MCF 10A (cell line): ENCODE measurements at regions of chr13 and their contacts with region 1.

Region 1: GRCh38 chr13:95378603-95379002 is 77.4 kb upstream of the ABCC4 start:
- DNase-seq: peak; percentile 54
- H3K4me3 Mint-ChIP-seq: no peak overlapping the region
- H3K27ac Mint-ChIP-seq: no peak overlapping the region
- H3K4me1 Mint-ChIP-seq: peaks cover 6% of the 10 kb centered on the region
- H3K27me3 Mint-ChIP-seq: peaks cover 14% of the 10 kb centered on the region
- CTCF ChIP-seq: no peak

Region 2: DNA sequence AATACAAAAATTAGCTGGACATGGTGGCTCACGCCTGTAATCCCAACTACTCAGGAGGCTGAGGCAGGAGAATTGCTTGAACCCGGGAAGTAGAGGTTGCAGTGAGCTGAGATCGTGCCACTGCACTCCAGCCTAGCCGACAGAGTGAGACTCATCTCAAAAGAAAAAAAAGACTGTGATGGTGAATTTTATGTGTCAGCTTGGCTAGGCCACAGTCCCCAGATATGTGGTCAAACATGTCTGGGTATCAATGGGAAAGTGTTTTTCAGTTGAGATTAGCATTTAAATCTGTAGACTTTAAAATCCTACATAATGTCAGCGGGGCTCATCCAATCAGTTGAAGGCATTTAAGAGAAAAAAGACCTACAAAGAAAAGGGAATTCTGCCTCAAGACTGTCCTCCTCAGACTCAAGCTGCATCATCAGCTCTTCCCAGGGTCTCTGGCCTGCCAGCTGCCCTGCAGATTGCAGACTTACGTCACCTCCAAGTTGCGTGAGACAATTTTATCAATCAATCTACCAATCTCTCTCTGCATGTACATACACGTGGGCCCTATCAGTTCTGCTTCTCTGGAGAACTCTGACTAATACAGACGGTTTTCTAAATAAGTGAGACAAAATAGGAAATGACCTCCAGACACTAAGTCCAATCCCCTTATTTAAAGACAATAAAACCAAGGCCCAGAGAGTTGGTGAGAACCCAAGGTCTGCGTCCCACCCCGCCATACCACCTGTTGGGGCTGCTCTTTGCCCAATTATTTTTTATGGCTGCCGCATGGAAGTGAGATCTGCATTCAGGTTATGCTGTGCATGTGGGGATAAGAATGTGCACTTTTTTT is 176.6 kb before region 1 on chr13:
- CTCF ChIA-PET with region 1: interaction called, 12 read pairs
- POLR2A ChIA-PET with region 1: no interaction called
- intact Hi-C with region 1: no loop called
- DNase-seq: no peak
- H3K4me3 Mint-ChIP-seq: no peak overlapping the region
- H3K27ac Mint-ChIP-seq: no peak overlapping the region
- H3K4me1 Mint-ChIP-seq: no peaks in the 10 kb centered on the region
- H3K27me3 Mint-ChIP-seq: no peaks in the 10 kb centered on the region
- CTCF ChIP-seq: no peak

Region 3: GRCh38 chr13:95301183-95301967 is 77.2 kb before region 1 on chr13 and contains the start of gene ABCC4:
- CTCF ChIA-PET with region 1: interaction called, 153 read pairs
- POLR2A ChIA-PET with region 1: interaction called, 6 read pairs
- intact Hi-C with region 1: loop called (anchors 1 kb)
- DNase-seq: peak; percentile 66
- H3K4me3 Mint-ChIP-seq: peak within 1 kb of the TSS; percentile 75
- H3K27ac Mint-ChIP-seq: peak within 1 kb of the TSS; percentile 41
- H3K4me1 Mint-ChIP-seq: peaks cover 10% of the 10 kb centered on the region
- H3K27me3 Mint-ChIP-seq: no peaks in the 10 kb centered on the region
- CTCF ChIP-seq: no peak
- total RNA-seq, gene ABCC4: 13.8 and 13.9 TPM in 2 replicates

Region 4: DNA sequence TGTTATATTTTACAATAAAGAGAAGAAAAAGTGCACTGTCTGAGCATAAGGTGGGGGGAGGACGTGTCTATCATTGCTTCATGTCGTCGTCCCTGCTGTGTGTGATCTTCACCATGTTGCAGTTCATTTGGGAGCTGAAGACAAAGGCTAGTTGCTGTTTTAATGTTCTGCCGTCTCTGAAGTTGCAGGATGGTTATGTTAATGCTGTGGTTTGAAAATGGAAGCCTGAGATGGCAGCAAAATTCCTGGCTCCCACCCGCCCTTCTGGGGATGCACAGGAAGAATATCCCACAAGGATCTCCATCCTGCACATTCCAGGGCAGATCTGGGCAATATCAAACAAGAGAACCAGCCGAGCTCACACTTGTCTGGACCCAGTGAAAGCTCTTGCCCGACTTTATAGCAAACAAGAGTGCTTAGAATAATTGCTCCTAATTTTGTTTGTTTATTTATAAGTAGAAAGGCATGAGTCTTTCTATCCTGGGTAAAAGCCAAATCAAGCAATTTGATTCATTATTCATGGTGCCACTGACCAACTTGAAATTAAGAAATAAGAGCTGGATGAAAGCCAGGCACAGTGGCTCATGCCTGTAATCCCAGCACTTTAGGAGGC is 32.9 kb after region 1 on chr13:
- CTCF ChIA-PET with region 1: interaction called, 172 read pairs
- POLR2A ChIA-PET with region 1: no interaction called
- intact Hi-C with region 1: no loop called
- DNase-seq: peak; percentile 86
- H3K4me3 Mint-ChIP-seq: no peak overlapping the region
- H3K27ac Mint-ChIP-seq: no peak overlapping the region
- H3K4me1 Mint-ChIP-seq: no peaks in the 10 kb centered on the region
- H3K27me3 Mint-ChIP-seq: no peaks in the 10 kb centered on the region
- CTCF ChIP-seq: no peak

Region 5: DNA sequence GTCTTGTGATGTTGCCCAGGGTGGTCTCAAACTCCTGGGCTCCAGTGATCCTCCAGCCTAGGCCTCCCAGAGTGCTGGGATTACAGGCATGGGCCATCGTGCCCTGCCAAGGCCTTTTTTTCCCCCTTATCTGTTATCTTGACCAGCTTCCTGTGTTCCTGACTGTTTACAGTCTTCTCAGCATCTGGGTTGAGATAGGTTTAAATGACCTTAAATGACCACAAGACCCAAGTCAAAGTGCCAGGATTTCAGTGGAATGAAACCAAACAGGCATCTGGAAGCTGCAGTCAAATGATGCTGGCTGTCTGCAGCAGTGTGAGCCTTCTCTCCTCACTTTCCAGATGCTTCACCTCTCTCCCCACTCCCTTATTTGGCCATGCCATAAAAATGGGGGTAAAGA is 59.7 kb after region 1 on chr13:
- CTCF ChIA-PET with region 1: no interaction called
- POLR2A ChIA-PET with region 1: no interaction called
- intact Hi-C with region 1: no loop called
- DNase-seq: no peak
- H3K4me3 Mint-ChIP-seq: no peak overlapping the region
- H3K27ac Mint-ChIP-seq: no peak overlapping the region
- H3K4me1 Mint-ChIP-seq: no peaks in the 10 kb centered on the region
- H3K27me3 Mint-ChIP-seq: peaks cover 7% of the 10 kb centered on the region
- CTCF ChIP-seq: no peak